Activated naive CD4-positive, alpha-beta T cell treated with anti-CD3 and anti-CD28 coated beads for 36 hours (primary cell): ENCODE measurements at regions of chr12 and their contacts with region 1.

Region 1: DNA sequence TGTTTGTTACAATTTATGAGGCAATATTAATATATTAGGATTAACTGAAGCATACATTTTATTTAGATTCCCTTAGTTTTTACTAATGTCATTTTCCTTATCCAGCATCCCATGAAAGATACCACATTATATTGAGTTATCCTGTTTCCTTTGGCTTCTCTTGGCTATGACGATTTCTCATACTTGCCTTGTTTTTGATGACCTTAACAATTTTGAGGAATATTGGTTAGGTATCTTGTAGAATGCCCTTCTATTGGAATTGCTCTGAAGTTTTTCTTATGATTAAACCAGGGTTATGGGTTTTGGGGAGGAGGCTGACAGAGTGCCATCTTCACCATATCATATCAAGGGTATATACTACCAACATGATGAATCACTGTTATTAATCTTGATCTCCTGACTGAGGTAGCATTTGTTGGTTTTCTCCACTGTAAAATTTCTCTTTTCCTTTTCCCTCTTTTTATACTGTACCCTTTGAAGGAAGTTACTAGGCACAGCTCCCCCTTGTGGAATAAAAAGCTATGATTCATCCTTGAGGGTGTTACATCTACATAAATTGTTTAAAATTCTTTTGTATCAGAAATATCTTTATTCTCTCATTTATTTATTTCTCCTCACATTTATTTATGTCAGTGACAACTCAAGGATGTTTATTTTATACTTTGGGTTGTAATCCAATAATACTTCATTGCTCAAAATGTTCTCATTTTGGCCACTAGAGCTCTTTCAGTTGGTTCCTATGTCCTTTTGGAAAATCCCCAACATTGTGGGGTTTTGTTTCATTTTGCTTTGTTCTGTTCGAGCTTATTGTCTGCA is 239.0 kb downstream of the SLC16A7 start:
- DNase-seq: no peak
- H3K4me3 Mint-ChIP-seq: no peak overlapping the region
- H3K27ac Mint-ChIP-seq: no peak overlapping the region
- H3K4me1 Mint-ChIP-seq: no peaks in the 10 kb centered on the region
- H3K27me3 Mint-ChIP-seq: peaks cover 2% of the 10 kb centered on the region

Region 2: GRCh38 chr12:59113831-59114615 is 720.8 kb before region 1 on chr12:
- CTCF ChIA-PET with region 1: no interaction called
- intact Hi-C with region 1: loop called (anchors 10 kb)
- DNase-seq: peak; percentile 81
- H3K4me3 Mint-ChIP-seq: no peak overlapping the region
- H3K27ac Mint-ChIP-seq: no peak overlapping the region
- H3K4me1 Mint-ChIP-seq: no peaks in the 10 kb centered on the region
- H3K27me3 Mint-ChIP-seq: no peaks in the 10 kb centered on the region

Region 3: GRCh38 chr12:59403259-59403932 is 431.5 kb before region 1 on chr12:
- CTCF ChIA-PET with region 1: interaction called, 11 read pairs
- intact Hi-C with region 1: loop called (anchors 1 kb)
- DNase-seq: peak; percentile 54
- H3K4me3 Mint-ChIP-seq: no peak overlapping the region
- H3K27ac Mint-ChIP-seq: no peak overlapping the region
- H3K4me1 Mint-ChIP-seq: peaks cover 9% of the 10 kb centered on the region
- H3K27me3 Mint-ChIP-seq: no peaks in the 10 kb centered on the region

Region 4: GRCh38 chr12:59444932-59445331 is 389.9 kb before region 1 on chr12:
- CTCF ChIA-PET with region 1: interaction called, 5 read pairs
- intact Hi-C with region 1: loop called (anchors 1 kb)
- DNase-seq: peak; percentile 36
- H3K4me3 Mint-ChIP-seq: no peak overlapping the region
- H3K27ac Mint-ChIP-seq: no peak overlapping the region
- H3K4me1 Mint-ChIP-seq: no peaks in the 10 kb centered on the region
- H3K27me3 Mint-ChIP-seq: peaks cover 19% of the 10 kb centered on the region

Region 5: DNA sequence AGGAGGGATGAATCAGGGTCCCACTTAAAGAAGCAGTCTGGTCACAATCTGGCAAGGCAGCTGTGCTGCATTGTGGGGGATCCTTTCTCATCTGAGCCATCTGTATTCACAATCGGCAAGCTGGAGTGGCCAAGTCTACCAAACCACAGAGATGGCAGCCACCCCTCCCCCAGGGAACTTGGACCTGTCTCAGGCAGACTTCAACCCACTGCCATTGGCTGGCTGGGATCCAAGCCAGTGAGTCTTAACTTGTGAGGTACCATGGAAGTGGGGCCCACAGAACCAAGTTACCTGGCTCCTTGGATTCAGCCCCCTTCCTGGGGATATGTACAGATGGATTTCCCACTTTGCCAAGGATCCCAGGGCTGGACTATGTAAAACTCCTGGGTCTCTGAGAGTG is 42.2 kb before region 1 on chr12:
- CTCF ChIA-PET with region 1: no interaction called
- intact Hi-C with region 1: no loop called
- DNase-seq: no peak
- H3K4me3 Mint-ChIP-seq: no peak overlapping the region
- H3K27ac Mint-ChIP-seq: no peak overlapping the region
- H3K4me1 Mint-ChIP-seq: no peaks in the 10 kb centered on the region
- H3K27me3 Mint-ChIP-seq: no peaks in the 10 kb centered on the region